GM13977 (cell line): ENCODE measurements at regions of chrX and their contacts with region 1.

Region 1: GRCh38 chrX:138191998-138192397 is 519.5 kb downstream of the FGF13 start:
- DNase-seq: peak; percentile 5
- CTCF ChIP-seq: peak; percentile 62

Region 2: DNA sequence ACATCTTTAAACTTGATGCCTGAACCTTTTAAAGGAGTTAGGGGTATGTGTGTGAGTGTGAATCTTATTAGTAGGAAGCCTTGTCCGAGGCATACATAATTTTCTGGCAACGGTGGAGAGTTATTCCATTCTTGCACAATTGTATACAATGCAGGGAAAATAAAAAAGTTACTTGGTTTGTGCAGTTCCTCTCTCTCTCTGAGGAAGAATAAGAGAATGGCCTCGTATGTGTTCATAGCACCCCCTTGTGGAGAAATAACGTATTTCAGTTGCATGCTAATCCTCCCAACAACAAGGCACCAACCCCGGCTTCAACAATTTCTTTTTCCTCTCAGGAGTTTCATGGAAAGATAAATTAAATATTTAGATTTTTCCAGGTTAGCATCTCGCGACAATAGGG is 553.2 kb after region 1 on chrX:
- in situ Hi-C with region 1: loop called (anchors 25 kb)
- DNase-seq: peak; percentile 15
- CTCF ChIP-seq: peak; percentile 67